ENCODE measurements at regions of chr7 and their contacts with region 1.

Region 1: GRCh38 chr7:139075031-139075652 is 34.4 kb downstream of the ZC3HAV1 start:
- DNase-seq: peak; percentile 43 to 91 (median 57)
- ATAC-seq: peak; percentile 78
- H3K4me3 ChIP-seq: no peak overlapping the region
- H3K4me3 Mint-ChIP-seq: peak overlapping the region; percentile 76
- H3K27ac ChIP-seq: peak overlapping the region; percentile 23 to 56
- H3K27ac Mint-ChIP-seq: peak overlapping the region; percentile 84
- H3K4me1 ChIP-seq: peaks cover 61% of the 10 kb centered on the region
- H3K4me1 Mint-ChIP-seq: peaks cover 64% of the 10 kb centered on the region
- H3K27me3 ChIP-seq: no peaks in the 10 kb centered on the region
- H3K27me3 Mint-ChIP-seq: no peaks in the 10 kb centered on the region
- CTCF ChIP-seq: peak; percentile 80

Region 2: DNA sequence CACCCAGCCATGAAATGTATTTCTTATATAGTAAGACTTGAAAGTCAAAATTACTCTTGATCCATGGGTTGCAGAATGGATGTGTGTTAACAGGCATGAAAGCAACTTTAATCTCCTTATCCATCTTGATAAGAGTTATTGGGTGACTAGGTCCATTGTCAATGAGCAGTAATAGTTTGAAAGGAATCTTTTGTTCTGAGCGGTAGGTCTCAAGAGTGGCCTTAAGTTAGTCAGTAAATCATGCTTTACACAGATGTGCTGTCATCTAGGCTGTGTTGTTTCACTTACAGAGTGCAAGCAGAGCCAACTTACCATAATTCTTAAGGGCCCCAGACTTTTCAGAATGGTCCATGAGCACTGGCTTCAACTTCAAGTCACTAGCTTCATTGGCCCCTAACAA is 145.2 kb before region 1 on chr7:
- CTCF ChIA-PET with region 1: no interaction called
- POLR2A ChIA-PET with region 1: no interaction called
- intact Hi-C with region 1: no loop called
- DNase-seq: no peak
- ATAC-seq: no peak
- H3K4me3 ChIP-seq: no peak overlapping the region
- H3K4me3 Mint-ChIP-seq: no peak overlapping the region
- H3K27ac ChIP-seq: no peak overlapping the region
- H3K27ac Mint-ChIP-seq: no peak overlapping the region
- H3K4me1 ChIP-seq: no peaks in the 10 kb centered on the region
- H3K4me1 Mint-ChIP-seq: no peaks in the 10 kb centered on the region
- H3K27me3 ChIP-seq: no peaks in the 10 kb centered on the region
- H3K27me3 Mint-ChIP-seq: no peaks in the 10 kb centered on the region
- CTCF ChIP-seq: no peak

Region 3: DNA sequence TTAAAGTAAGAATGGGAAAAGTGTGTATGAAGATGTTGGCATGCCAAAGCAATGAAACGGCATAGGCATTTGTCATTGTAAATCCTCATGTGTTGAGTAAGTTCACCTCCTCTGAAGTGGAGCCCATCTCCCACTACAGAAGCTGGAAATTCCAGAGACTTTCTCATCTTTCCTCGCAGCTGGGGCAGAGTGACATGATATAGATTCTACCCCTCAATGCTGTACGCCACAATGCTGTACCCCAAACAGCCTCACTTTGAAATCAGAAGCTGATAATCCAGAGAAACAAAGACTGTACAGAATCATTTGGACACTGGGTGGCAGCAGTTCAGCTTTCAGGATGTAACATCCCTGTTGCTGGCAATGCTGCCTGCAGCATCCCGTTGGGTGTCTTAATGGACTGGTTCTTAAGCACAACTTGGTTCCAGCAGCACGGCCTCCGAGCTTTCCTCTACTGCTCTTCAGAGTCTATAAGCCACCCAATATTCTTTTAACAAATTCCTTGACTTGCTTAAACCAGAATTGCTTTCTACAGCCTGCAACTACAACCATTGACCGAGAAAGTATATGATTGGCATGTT is 58.1 kb before region 1 on chr7:
- CTCF ChIA-PET with region 1: interaction called, 23 read pairs
- POLR2A ChIA-PET with region 1: interaction called, 10 read pairs
- intact Hi-C with region 1: loop called (anchors 1 kb)
- DNase-seq: peak; percentile 26 to 80 (median 52)
- ATAC-seq: peak; percentile 95
- H3K4me3 ChIP-seq: no peak overlapping the region
- H3K4me3 Mint-ChIP-seq: no peak overlapping the region
- H3K27ac ChIP-seq: no peak overlapping the region
- H3K27ac Mint-ChIP-seq: no peak overlapping the region
- H3K4me1 ChIP-seq: peaks cover 5% of the 10 kb centered on the region
- H3K4me1 Mint-ChIP-seq: peaks cover 7% of the 10 kb centered on the region
- H3K27me3 ChIP-seq: no peaks in the 10 kb centered on the region
- H3K27me3 Mint-ChIP-seq: peaks cover 4% of the 10 kb centered on the region
- CTCF ChIP-seq: peak; percentile 76

Region 4: GRCh38 chr7:139054101-139054500 is 21.0 kb before region 1 on chr7:
- CTCF ChIA-PET with region 1: interaction called, 10 read pairs
- POLR2A ChIA-PET with region 1: interaction called, 6 read pairs
- intact Hi-C with region 1: no loop called
- DNase-seq: no peak
- ATAC-seq: no peak
- H3K4me3 ChIP-seq: no peak overlapping the region
- H3K4me3 Mint-ChIP-seq: no peak overlapping the region
- H3K27ac ChIP-seq: no peak overlapping the region
- H3K27ac Mint-ChIP-seq: peak overlapping the region; percentile 75
- H3K4me1 ChIP-seq: peaks cover 8% of the 10 kb centered on the region
- H3K4me1 Mint-ChIP-seq: peaks cover 36% of the 10 kb centered on the region
- H3K27me3 ChIP-seq: no peaks in the 10 kb centered on the region
- H3K27me3 Mint-ChIP-seq: no peaks in the 10 kb centered on the region
- CTCF ChIP-seq: no peak

Region 5: GRCh38 chr7:139086454-139086853 is 11.3 kb after region 1 on chr7:
- CTCF ChIA-PET with region 1: interaction called, 19 read pairs
- POLR2A ChIA-PET with region 1: interaction called, 10 read pairs
- intact Hi-C with region 1: no loop called
- DNase-seq: no peak
- ATAC-seq: no peak
- H3K4me3 ChIP-seq: no peak overlapping the region
- H3K4me3 Mint-ChIP-seq: peak overlapping the region; percentile 16
- H3K27ac ChIP-seq: no peak overlapping the region
- H3K27ac Mint-ChIP-seq: peak overlapping the region; percentile 74
- H3K4me1 ChIP-seq: peaks cover 88% of the 10 kb centered on the region
- H3K4me1 Mint-ChIP-seq: peaks cover 92% of the 10 kb centered on the region
- H3K27me3 ChIP-seq: no peaks in the 10 kb centered on the region
- H3K27me3 Mint-ChIP-seq: no peaks in the 10 kb centered on the region
- CTCF ChIP-seq: no peak

Region 6: GRCh38 chr7:139104091-139104450 is 28.9 kb after region 1 on chr7:
- CTCF ChIA-PET with region 1: interaction called, 10 read pairs
- POLR2A ChIA-PET with region 1: interaction called, 26 read pairs
- intact Hi-C with region 1: loop called in 1 of 2 experiments (anchors 2 kb)
- DNase-seq: peak in 5 of 14 experiments; percentile 31 to 76 (median 65)
- ATAC-seq: no peak
- H3K4me3 ChIP-seq: peak overlapping the region; percentile 97
- H3K4me3 Mint-ChIP-seq: peak overlapping the region; percentile 95
- H3K27ac ChIP-seq: peak overlapping the region; percentile 57 to 63
- H3K27ac Mint-ChIP-seq: peak overlapping the region; percentile 92
- H3K4me1 ChIP-seq: peaks cover 27% of the 10 kb centered on the region
- H3K4me1 Mint-ChIP-seq: peaks cover 52% of the 10 kb centered on the region
- H3K27me3 ChIP-seq: no peaks in the 10 kb centered on the region
- H3K27me3 Mint-ChIP-seq: no peaks in the 10 kb centered on the region
- CTCF ChIP-seq: no peak

Region 7: GRCh38 chr7:139124084-139124914 is 49.2 kb after region 1 on chr7:
- CTCF ChIA-PET with region 1: interaction called, 5 read pairs
- POLR2A ChIA-PET with region 1: interaction called, 4 read pairs
- intact Hi-C with region 1: loop called in 1 of 2 experiments (anchors 1 kb)
- DNase-seq: no peak
- ATAC-seq: no peak
- H3K4me3 ChIP-seq: no peak overlapping the region
- H3K4me3 Mint-ChIP-seq: no peak overlapping the region
- H3K27ac ChIP-seq: no peak overlapping the region
- H3K27ac Mint-ChIP-seq: no peak overlapping the region
- H3K4me1 ChIP-seq: peaks cover 25% of the 10 kb centered on the region
- H3K4me1 Mint-ChIP-seq: peaks cover 34% of the 10 kb centered on the region
- H3K27me3 ChIP-seq: no peaks in the 10 kb centered on the region
- H3K27me3 Mint-ChIP-seq: no peaks in the 10 kb centered on the region
- CTCF ChIP-seq: no peak

Measured in CD4-positive, alpha-beta T cell (primary cell).